HEK293 (cell line): ENCODE measurements at regions of chr12 and their contacts with region 1.

Region 1: GRCh38 chr12:106841510-106842302 is 67.2 kb downstream of the RIC8B start:
- H3K4me3 ChIP-seq: no peak overlapping the region
- H3K27ac ChIP-seq: no peak overlapping the region
- H3K4me1 ChIP-seq: peaks cover 5% of the 10 kb centered on the region; the same call in 1 of the 2 replicates
- CTCF ChIP-seq: no peak

Region 2: GRCh38 chr12:106357549-106358395 is 483.9 kb before region 1 on chr12 and contains the start of gene POLR3B:
- CTCF ChIA-PET with region 1: interaction called, 27 read pairs
- POLR2A ChIA-PET with region 1: interaction called, 4 read pairs
- H3K4me3 ChIP-seq: peak within 1 kb of the TSS; percentile 98
- H3K27ac ChIP-seq: peak within 1 kb of the TSS; percentile 74
- H3K4me1 ChIP-seq: no peaks in the 10 kb centered on the region
- CTCF ChIP-seq: peak; percentile 96

Region 3: GRCh38 chr12:106386813-106387535 is 454.7 kb before region 1 on chr12:
- CTCF ChIA-PET with region 1: interaction called, 21 read pairs
- POLR2A ChIA-PET with region 1: no interaction called
- H3K4me3 ChIP-seq: no peak overlapping the region
- H3K27ac ChIP-seq: no peak overlapping the region
- H3K4me1 ChIP-seq: no peaks in the 10 kb centered on the region
- CTCF ChIP-seq: no peak